CD4-positive, alpha-beta memory T cell (primary cell): ENCODE measurements at regions of chr16 and their contacts with region 1.

Region 1: GRCh38 chr16:667780-668518 is at the start of gene RHOT2:
- DNase-seq: peak; percentile 88 to 93 (median 91)
- H3K4me3 ChIP-seq: peak within 1 kb of the TSS; percentile 42 to 73
- H3K4me3 Mint-ChIP-seq: peak within 1 kb of the TSS; percentile 77 to 86 (median 80)
- H3K27ac ChIP-seq: peak within 1 kb of the TSS; percentile 69
- H3K27ac Mint-ChIP-seq: peak within 1 kb of the TSS; percentile 38 to 94 (median 86)
- H3K4me1 ChIP-seq: peaks cover 23% of the 10 kb centered on the region
- H3K4me1 Mint-ChIP-seq: peaks cover 3 to 21% (median 5%) of the 10 kb centered on the region in 4 donors
- H3K27me3 ChIP-seq: no peaks in the 10 kb centered on the region
- H3K27me3 Mint-ChIP-seq: no peaks in the 10 kb centered on the region
- total RNA-seq, gene RHOT2: 254 to 263 TPM

Region 2: GRCh38 chr16:391885-392335 is 276.0 kb before region 1 on chr16:
- CTCF ChIA-PET with region 1: no interaction called
- POLR2A ChIA-PET with region 1: no interaction called
- intact Hi-C with region 1: loop called (anchors 1 kb)
- DNase-seq: peak; percentile 61 to 80 (median 64)
- H3K4me3 ChIP-seq: no peak overlapping the region
- H3K4me3 Mint-ChIP-seq: peak overlapping the region in 1 of 8 donors; percentile 18
- H3K27ac ChIP-seq: no peak overlapping the region
- H3K27ac Mint-ChIP-seq: peak overlapping the region in 4 of 7 donors; percentile 6 to 86 (median 52)
- H3K4me1 ChIP-seq: peaks cover 8% of the 10 kb centered on the region
- H3K4me1 Mint-ChIP-seq: peaks cover 12 to 16% (median 14%) of the 10 kb centered on the region in 4 donors
- H3K27me3 ChIP-seq: no peaks in the 10 kb centered on the region
- H3K27me3 Mint-ChIP-seq: no peaks in the 10 kb centered on the region

Region 3: DNA sequence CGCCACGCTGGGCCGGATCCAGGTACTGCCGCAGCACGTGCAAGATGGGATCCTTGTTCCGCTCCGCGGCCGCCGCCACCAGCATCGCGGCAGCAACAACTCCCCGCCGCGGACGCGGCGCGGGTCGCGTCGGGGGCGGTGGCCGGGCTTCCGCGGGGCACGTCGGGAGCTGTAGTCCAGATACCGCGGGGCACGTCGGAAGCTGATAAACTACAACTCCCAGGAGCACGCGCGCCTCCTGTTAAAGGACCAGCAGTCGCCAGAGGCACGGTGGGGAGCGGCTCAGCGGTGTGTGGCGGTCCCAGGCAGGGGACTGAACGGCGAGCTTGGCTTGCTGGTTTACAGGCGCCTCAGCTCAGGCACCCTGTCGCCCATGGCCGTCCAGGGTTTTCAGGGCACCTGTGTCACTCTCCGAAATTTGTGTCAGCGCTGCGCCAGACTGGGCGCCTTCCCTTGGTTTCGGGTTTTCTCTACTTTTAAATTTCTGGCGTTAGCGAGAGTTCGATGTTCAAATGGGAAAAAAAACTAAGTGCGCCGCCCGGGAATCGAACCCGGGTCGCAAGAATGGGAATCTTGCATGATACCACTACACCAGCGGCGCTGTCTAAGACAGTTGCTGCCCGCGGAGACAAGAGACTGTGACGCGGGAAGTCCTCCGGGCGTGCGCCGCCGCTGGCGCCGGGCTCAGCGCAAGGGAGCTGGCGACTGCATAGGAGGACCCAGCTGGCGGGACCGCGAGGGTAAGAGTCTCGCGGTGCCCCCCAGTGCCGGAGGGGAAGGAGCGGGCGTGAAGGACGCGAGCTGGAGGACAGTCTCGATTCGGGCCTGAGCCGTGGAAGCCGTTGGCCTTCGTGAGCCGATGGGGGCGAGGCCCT is 31.5 kb before region 1 on chr16 and contains the start of gene METTL26:
- CTCF ChIA-PET with region 1: no interaction called
- POLR2A ChIA-PET with region 1: interaction called, 19 read pairs
- intact Hi-C with region 1: loop called (anchors 1 kb)
- DNase-seq: peak; percentile 92 to 95 (median 93)
- H3K4me3 ChIP-seq: peak within 1 kb of the TSS; percentile 81 to 86
- H3K4me3 Mint-ChIP-seq: peak within 1 kb of the TSS; percentile 95 to 100 (median 98)
- H3K27ac ChIP-seq: peak within 1 kb of the TSS; percentile 76
- H3K27ac Mint-ChIP-seq: peak within 1 kb of the TSS; percentile 94 to 100 (median 99)
- H3K4me1 ChIP-seq: peaks cover 21% of the 10 kb centered on the region
- H3K4me1 Mint-ChIP-seq: peaks cover 0 to 10% (median 5%) of the 10 kb centered on the region in 4 donors
- H3K27me3 ChIP-seq: no peaks in the 10 kb centered on the region
- H3K27me3 Mint-ChIP-seq: peaks cover 0 to 3% of the 10 kb centered on the region in 2 donors
- total RNA-seq, gene METTL26: 68.4 to 74.1 TPM

Region 4: GRCh38 chr16:648781-649589 is 19.0 kb before region 1 on chr16 and contains the start of gene WDR90:
- CTCF ChIA-PET with region 1: interaction called, 6 read pairs
- POLR2A ChIA-PET with region 1: interaction called, 8 read pairs
- intact Hi-C with region 1: loop called (anchors 2 kb)
- DNase-seq: peak; percentile 88 to 93 (median 90)
- H3K4me3 ChIP-seq: peak within 1 kb of the TSS; percentile 3 to 53
- H3K4me3 Mint-ChIP-seq: peak within 1 kb of the TSS; percentile 60 to 82 (median 76)
- H3K27ac ChIP-seq: peak within 1 kb of the TSS; percentile 79
- H3K27ac Mint-ChIP-seq: peak within 1 kb of the TSS; percentile 68 to 92 (median 87)
- H3K4me1 ChIP-seq: peaks cover 14% of the 10 kb centered on the region
- H3K4me1 Mint-ChIP-seq: peaks cover 0 to 30% (median 8%) of the 10 kb centered on the region in 4 donors
- H3K27me3 ChIP-seq: no peaks in the 10 kb centered on the region
- H3K27me3 Mint-ChIP-seq: no peaks in the 10 kb centered on the region
- total RNA-seq, gene WDR90: 18.0 to 19.7 TPM

Region 5: DNA sequence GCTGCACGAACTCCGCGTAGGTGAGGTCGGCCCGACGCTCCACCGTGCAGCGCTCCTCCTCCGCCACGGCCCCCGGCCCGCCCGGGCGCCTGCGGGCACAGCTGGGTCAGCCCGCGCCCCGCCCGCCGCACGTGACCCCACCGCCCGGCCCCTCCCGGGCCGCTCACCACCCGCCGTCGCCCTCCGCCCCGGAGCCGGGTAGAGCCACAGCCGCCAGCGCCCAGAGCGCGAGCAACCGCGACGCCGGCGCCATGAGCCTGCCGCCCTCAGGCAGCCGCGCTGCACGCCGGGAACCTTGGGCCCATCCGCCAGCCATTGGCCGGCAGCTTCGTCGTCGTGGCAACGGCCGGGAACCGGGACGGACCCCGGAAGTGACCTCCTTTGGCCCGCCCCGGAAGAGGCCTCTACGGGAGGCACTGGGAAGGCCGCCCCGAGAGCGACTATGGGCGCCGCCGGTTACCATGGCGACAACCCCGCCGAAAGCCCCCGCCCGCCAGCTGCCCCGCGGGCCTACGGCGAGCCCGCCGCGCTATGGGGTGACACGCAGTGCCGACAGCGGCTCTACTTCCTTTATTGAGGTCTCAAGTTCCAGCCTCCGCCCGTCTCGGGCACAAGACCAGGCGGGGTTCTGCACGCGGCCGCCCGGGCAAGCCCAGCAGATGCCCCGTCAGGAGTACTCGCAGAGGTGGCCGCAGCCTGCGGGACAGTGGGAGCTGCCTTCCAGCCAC is 16.3 kb after region 1 on chr16 and contains the start of gene JMJD8:
- CTCF ChIA-PET with region 1: interaction called, 5 read pairs
- POLR2A ChIA-PET with region 1: interaction called, 89 read pairs
- intact Hi-C with region 1: loop called (anchors 1 kb)
- DNase-seq: peak; percentile 93 to 96 (median 94)
- H3K4me3 ChIP-seq: peak within 1 kb of the TSS in 1 of 2 donors; percentile 62
- H3K4me3 Mint-ChIP-seq: peak within 1 kb of the TSS; percentile 66 to 86 (median 77)
- H3K27ac ChIP-seq: peak within 1 kb of the TSS; percentile 70
- H3K27ac Mint-ChIP-seq: peak within 1 kb of the TSS; percentile 42 to 91 (median 85)
- H3K4me1 ChIP-seq: peaks cover 58% of the 10 kb centered on the region
- H3K4me1 Mint-ChIP-seq: peaks cover 6 to 44% (median 27%) of the 10 kb centered on the region in 4 donors
- H3K27me3 ChIP-seq: no peaks in the 10 kb centered on the region
- H3K27me3 Mint-ChIP-seq: no peaks in the 10 kb centered on the region
- total RNA-seq, gene JMJD8: 45.0 to 49.0 TPM

Region 6: DNA sequence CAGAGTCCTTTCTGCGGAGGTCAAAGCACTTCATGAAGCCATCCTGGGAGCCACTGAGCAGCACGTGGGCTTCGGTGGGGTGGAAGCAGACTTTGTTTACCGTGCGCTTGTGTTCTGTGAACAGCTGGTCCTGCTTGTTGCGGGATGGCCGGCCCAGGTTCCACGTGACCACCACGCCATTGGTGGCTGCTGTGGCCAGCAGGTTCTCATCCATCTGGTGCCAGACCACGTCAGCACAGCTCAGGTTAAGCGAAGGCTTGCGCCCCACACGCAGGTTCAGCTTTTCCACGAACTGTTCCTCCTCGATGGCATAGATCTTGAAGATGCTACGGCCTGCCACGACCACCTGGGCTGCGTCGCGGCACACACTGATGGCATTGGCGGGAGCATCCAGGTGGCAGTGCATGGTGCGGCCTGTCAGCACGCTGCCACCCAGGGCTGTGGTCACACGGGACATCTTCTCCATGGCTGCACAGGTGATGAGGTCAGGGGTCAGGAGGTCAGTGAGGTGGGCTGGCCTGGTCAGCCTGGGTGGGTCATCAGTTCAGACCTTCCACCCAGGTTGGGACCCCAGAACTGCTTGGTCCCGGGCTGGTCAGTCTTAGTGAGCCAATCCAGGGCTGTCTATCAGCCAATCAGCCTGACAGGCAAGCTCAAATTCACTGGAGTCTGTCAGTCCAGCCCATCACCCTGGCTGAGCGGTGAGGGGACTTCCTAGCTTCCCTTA is 21.4 kb after region 1 on chr16:
- CTCF ChIA-PET with region 1: interaction called, 3 read pairs
- POLR2A ChIA-PET with region 1: interaction called, 89 read pairs
- intact Hi-C with region 1: loop called (anchors 1 kb)
- DNase-seq: no peak
- H3K4me3 ChIP-seq: peak overlapping the region; percentile 70 to 93
- H3K4me3 Mint-ChIP-seq: peak overlapping the region; percentile 89 to 94 (median 90)
- H3K27ac ChIP-seq: peak overlapping the region; percentile 64
- H3K27ac Mint-ChIP-seq: peak overlapping the region; percentile 88 to 93 (median 92)
- H3K4me1 ChIP-seq: peaks cover 38% of the 10 kb centered on the region
- H3K4me1 Mint-ChIP-seq: peaks cover 10 to 41% (median 27%) of the 10 kb centered on the region in 4 donors
- H3K27me3 ChIP-seq: no peaks in the 10 kb centered on the region
- H3K27me3 Mint-ChIP-seq: no peaks in the 10 kb centered on the region

Region 7: DNA sequence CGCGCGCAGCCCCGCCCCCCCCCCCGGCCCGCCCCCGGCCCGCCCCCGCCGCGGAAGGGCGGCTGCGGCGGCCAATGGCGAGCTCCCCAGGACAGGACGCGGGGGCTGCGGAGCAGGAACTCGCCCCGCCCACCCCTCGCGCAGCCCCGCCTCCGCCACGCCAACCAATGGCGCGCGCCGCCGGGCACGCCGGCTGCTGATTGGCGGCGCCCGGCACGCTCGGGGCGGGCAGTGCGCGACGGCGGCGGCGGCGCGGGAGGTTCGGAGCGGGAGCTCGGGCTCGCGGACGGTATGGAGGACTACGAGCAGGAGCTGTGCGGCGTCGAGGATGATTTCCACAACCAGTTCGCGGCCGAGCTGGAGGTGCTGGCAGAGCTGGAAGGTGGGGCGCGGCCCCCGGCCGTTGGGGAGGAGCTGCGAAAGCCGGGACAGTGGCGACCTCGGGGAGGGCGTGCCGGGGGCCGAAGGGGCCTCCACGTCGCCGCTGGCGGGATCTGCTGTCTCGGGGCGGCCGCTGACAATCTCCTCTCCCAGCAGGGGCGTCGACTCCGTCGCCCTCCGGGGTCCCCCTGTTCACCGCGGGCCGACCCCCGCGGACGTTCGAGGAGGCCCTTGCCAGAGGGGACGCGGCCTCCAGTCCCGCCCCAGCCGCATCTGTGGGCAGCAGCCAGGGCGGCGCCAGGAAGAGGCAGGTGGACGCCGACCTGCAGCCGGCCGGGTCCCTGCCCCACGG is 120.6 kb after region 1 on chr16 and contains the start of gene CHTF18:
- CTCF ChIA-PET with region 1: no interaction called
- POLR2A ChIA-PET with region 1: no interaction called
- intact Hi-C with region 1: no loop called
- DNase-seq: peak; percentile 90 to 96 (median 95)
- H3K4me3 ChIP-seq: peak within 1 kb of the TSS; percentile 17 to 83
- H3K4me3 Mint-ChIP-seq: peak within 1 kb of the TSS; percentile 82 to 91 (median 85)
- H3K27ac ChIP-seq: peak within 1 kb of the TSS; percentile 73
- H3K27ac Mint-ChIP-seq: peak within 1 kb of the TSS in 6 of 7 donors; percentile 41 to 80 (median 67)
- H3K4me1 ChIP-seq: peaks cover 21% of the 10 kb centered on the region
- H3K4me1 Mint-ChIP-seq: peaks cover 2 to 30% (median 8%) of the 10 kb centered on the region in 4 donors
- H3K27me3 ChIP-seq: no peaks in the 10 kb centered on the region
- H3K27me3 Mint-ChIP-seq: no peaks in the 10 kb centered on the region
- total RNA-seq, gene CHTF18: 42.1 to 46.9 TPM